H1 (cell line): ENCODE measurements at regions of chr16 and their contacts with region 1.

Region 1: GRCh38 chr16:4538350-4539235 is at the start of gene CDIP1:
- DNase-seq: peak; percentile 85 to 97
- H3K4me3 ChIP-seq: peak within 1 kb of the TSS; percentile 69 to 87 (median 80)
- H3K27ac ChIP-seq: peak within 1 kb of the TSS; percentile 84
- H3K4me1 ChIP-seq: peaks cover 0 to 8% (median 5%) of the 10 kb centered on the region in 4 experiments; a peak in 5 of 7 replicates
- H3K27me3 ChIP-seq: peaks cover 1 to 14% (median 11%) of the 10 kb centered on the region in 4 experiments
- CTCF ChIP-seq: no peak
- EP300 ChIP-seq: 0 out of 3 replicates have a peak, but pooled peaks of 1 of the 2 experiments have one; percentile 8
- POLR2A ChIP-seq: peak in 1 of 2 experiments; percentile 86; a peak in 2 of 3 replicates
- RAD21 ChIP-seq: no peak
- total RNA-seq, gene CDIP1: 73.7 and 76.3 TPM in 2 replicates

Region 2: GRCh38 chr16:4315186-4316109 is 223.1 kb before region 1 on chr16 and contains the start of gene GLIS2:
- CTCF ChIA-PET with region 1: no interaction called
- POLR2A ChIA-PET with region 1: no interaction called
- DNase-seq: peak in 1 of 2 experiments; percentile 73
- H3K4me3 ChIP-seq: peak within 1 kb of the TSS; percentile 63 to 92 (median 68)
- H3K27ac ChIP-seq: peak within 1 kb of the TSS; percentile 39; the same call in 1 of the 2 replicates
- H3K4me1 ChIP-seq: peaks cover 0 to 39% (median 33%) of the 10 kb centered on the region in 4 experiments; a peak in 6 of 7 replicates
- H3K27me3 ChIP-seq: peaks cover 0 to 15% (median 11%) of the 10 kb centered on the region in 4 experiments; a peak in 6 of 7 replicates
- CTCF ChIP-seq: no peak
- EP300 ChIP-seq: no peak
- POLR2A ChIP-seq: no peak; a peak in 1 of 3 replicates
- RAD21 ChIP-seq: no peak
- total RNA-seq, gene GLIS2: 17.4 and 18.6 TPM in 2 replicates

Region 3: DNA sequence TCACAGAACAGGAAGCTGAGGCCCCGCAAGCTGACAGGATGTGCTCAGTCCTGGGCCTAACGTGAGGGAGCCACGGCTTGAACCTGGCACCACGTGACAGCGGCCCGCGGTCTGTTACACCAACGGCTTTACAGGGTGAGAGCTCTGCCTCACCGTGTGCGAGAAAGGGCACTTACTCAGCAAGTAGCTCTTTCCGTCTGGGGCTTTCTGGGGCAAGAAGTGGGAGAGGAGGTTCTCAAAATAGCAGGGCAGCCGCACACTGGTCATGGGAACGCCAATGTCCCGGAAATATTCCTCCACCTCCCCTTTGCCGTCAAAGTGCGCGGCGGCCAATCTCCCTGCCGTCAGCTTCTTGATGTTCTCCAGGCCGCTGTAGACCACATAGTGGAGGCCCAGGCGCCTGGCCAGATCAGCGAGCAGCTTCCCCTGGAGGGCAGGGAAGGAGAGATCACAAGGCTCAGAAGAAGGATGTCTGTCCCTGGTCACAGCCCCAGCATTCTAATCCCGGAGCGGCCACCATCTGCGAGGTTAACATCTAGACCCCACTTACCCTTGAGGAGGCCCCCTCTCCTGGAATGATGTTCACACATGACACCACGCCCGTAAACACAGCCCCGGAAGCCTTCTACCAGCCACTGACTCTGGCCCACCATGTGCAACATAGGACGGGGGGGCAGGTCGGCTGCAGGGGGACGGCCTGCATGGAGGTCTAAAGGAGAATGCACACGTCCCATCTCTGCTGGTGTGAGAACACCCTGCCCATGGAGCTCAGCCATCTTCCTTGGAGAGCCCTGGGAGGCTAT is 72.4 kb before region 1 on chr16:
- CTCF ChIA-PET with region 1: no interaction called
- POLR2A ChIA-PET with region 1: no interaction called
- DNase-seq: no peak
- H3K4me3 ChIP-seq: no peak overlapping the region
- H3K27ac ChIP-seq: no peak overlapping the region
- H3K4me1 ChIP-seq: peaks cover 0 to 7% (median 3%) of the 10 kb centered on the region in 4 experiments; a peak in 4 of 7 replicates
- H3K27me3 ChIP-seq: no peaks in the 10 kb centered on the region
- CTCF ChIP-seq: no peak
- EP300 ChIP-seq: no peak
- POLR2A ChIP-seq: no peak
- RAD21 ChIP-seq: no peak

Region 4: GRCh38 chr16:4523686-4524085 is 14.9 kb before region 1 on chr16:
- CTCF ChIA-PET with region 1: interaction called, 968 read pairs
- POLR2A ChIA-PET with region 1: interaction called, 11 read pairs
- DNase-seq: no peak
- H3K4me3 ChIP-seq: no peak overlapping the region
- H3K27ac ChIP-seq: no peak overlapping the region
- H3K4me1 ChIP-seq: peaks cover under 1 to 21% (median 16%) of the 10 kb centered on the region in 4 experiments
- H3K27me3 ChIP-seq: no peaks in the 10 kb centered on the region
- CTCF ChIP-seq: no peak
- EP300 ChIP-seq: no peak
- POLR2A ChIP-seq: no peak
- RAD21 ChIP-seq: no peak